ENCODE measurements at regions of chr19 and their contacts with region 1.

Region 1: GRCh38 chr19:4164262-4164661 is 10.8 kb downstream of the CREB3L3 start:
- DNase-seq: no peak
- H3K4me3 Mint-ChIP-seq: no peak overlapping the region
- H3K27ac Mint-ChIP-seq: no peak overlapping the region
- H3K4me1 Mint-ChIP-seq: no peaks in the 10 kb centered on the region
- H3K27me3 Mint-ChIP-seq: peaks cover 5% of the 10 kb centered on the region

Region 2: GRCh38 chr19:4208385-4209094 is 44.3 kb after region 1 on chr19:
- intact Hi-C with region 1: loop called (anchors 1 kb)
- DNase-seq: no peak
- H3K4me3 Mint-ChIP-seq: no peak overlapping the region
- H3K27ac Mint-ChIP-seq: no peak overlapping the region
- H3K4me1 Mint-ChIP-seq: no peaks in the 10 kb centered on the region
- H3K27me3 Mint-ChIP-seq: peaks cover 6% of the 10 kb centered on the region

Measured in activated T-helper 1 cell treated with anti-CD3 and anti-CD28 coated beads, Interleukin-12 subunit alpha, Interleukin-12 subunit beta, Interleukin-2, Interleukin-4 antibody, amounts not matched to agents 30 ng/mL and 10 ng/mL and 1 ng/mL, durations not matched to agents 14 hours and 24 hours and 36 hours (primary cell).